Activated CD4-positive, alpha-beta T cell treated with anti-CD3 and anti-CD28 coated beads, Interleukin-2, amount 10 ng/mL, durations not matched to agents 24 days and 14 days (primary cell): ENCODE measurements at regions of chr1 and their contacts with region 1.

Region 1: DNA sequence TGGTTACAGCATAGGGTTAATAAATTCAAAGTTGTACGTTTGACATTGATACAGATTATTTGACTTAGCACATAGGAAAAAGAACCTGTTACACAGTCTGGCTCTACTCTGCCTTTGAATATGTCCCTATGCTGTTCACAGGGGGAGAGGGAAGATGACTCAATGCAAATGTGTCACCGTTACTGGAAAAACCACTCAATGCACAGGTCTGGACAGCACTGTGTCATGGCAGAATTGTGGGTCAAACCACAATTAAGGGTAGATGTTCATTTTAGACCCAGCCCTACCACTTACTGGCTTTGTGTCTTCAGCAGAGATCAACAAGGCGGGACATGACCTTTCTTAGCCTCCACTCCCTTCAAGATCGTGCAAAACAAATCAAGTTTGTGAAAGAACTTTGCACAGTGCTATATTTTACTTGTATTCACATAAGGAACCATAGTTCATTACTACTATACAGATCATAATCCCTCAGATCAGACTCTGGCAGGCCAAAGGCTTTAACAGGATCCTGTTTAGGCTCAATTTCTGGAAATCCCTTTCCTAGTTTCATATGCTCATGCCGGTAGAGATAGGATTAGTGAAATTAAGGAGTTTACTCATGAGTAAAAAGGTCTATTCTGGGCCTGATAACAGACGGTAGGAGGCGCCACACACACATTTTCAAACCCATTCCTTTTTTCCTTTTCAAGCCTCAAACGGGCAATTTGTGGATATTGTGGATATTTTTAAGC is 22.1 kb downstream of the EIF2D start:
- DNase-seq: peak; percentile 90
- H3K4me3 Mint-ChIP-seq: peak overlapping the region; percentile 78
- H3K27ac Mint-ChIP-seq: peak overlapping the region; percentile 94
- H3K4me1 Mint-ChIP-seq: peaks cover 65% of the 10 kb centered on the region
- H3K27me3 Mint-ChIP-seq: no peaks in the 10 kb centered on the region

Region 2: DNA sequence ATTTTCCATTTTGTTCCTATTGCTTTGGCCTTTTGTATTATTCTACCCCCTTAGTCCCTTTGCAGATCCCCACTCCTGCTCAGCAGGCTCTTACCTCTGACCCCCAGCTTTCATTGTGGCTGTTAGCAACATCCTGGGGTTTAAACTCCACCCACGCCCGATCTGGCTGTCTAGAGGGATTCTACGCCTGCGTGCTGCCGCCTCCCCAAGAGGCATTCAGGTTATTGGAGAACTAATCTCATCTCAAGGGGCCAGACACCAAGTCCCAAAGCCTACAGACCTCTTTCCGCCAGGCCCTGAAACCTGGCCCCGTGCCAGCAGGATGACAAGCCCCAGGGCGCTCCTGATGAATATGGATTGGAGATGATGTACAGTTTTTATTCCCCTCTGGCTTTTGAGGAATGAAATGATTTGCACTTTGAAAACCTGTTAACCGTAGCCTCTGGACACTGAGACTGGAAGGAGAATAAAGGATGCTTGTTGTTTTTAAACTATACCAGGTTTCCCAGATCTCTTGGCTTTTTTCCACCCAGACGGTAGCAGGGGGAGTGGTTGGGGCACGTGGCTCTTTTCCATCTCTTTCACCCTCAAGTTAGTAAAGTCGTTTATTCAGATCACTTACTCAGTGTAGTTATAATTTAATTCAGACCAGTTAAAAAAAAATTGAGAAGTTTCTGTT is 134.4 kb before region 1 on chr1:
- intact Hi-C with region 1: no loop called
- DNase-seq: no peak
- H3K4me3 Mint-ChIP-seq: no peak overlapping the region
- H3K27ac Mint-ChIP-seq: no peak overlapping the region
- H3K4me1 Mint-ChIP-seq: peaks cover 18% of the 10 kb centered on the region
- H3K27me3 Mint-ChIP-seq: no peaks in the 10 kb centered on the region

Region 3: DNA sequence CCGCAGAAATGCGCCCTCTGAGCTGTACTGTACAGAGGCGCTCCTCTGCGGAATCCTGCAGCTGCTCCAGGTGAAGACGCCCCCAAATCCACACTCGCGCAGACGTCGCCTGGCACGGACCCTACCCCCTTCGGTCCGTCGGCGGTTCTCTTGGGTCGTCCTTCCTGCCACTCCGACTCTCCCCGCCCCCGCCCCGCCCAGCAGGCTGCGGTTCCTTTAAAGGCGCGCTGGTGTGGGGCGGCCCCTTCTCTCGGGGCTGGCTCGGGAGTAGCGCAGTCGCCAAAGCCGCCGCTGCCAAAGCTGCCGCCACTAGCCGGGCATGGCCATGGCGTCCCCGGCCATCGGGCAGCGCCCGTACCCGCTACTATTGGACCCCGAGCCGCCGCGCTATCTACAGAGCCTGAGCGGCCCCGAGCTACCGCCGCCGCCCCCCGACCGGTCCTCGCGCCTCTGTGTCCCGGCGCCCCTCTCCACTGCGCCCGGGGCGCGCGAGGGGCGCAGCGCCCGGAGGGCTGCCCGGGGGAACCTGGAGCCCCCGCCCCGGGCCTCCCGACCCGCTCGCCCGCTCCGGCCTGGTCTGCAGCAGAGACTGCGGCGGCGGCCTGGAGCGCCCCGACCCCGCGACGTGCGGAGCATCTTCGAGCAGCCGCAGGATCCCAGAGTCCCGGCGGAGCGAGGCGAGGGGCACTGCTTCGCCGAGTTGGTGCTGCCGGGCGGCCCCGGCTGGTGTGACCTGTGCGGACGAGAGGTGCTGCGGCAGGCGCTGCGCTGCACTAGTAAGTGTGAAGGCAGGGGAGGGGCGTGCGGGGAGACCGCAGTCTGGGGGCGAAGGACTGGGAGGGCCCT is 82.7 kb before region 1 on chr1 and contains the start of gene RASSF5:
- intact Hi-C with region 1: loop called (anchors 1 kb)
- DNase-seq: peak; percentile 96
- H3K4me3 Mint-ChIP-seq: peak within 1 kb of the TSS; percentile 80
- H3K27ac Mint-ChIP-seq: peak within 1 kb of the TSS; percentile 58
- H3K4me1 Mint-ChIP-seq: peaks cover 41% of the 10 kb centered on the region
- H3K27me3 Mint-ChIP-seq: peaks cover 22% of the 10 kb centered on the region
- total RNA-seq, gene RASSF5: 193 and 196 TPM in 2 replicates

Region 4: GRCh38 chr1:206544562-206545257 is 45.5 kb before region 1 on chr1:
- intact Hi-C with region 1: loop called (anchors 2 kb)
- DNase-seq: peak; percentile 96
- H3K4me3 Mint-ChIP-seq: no peak overlapping the region
- H3K27ac Mint-ChIP-seq: peak overlapping the region; percentile 66
- H3K4me1 Mint-ChIP-seq: peaks cover 17% of the 10 kb centered on the region
- H3K27me3 Mint-ChIP-seq: no peaks in the 10 kb centered on the region

Region 5: GRCh38 chr1:206556750-206557635 is 33.2 kb before region 1 on chr1:
- intact Hi-C with region 1: loop called (anchors 1 kb)
- DNase-seq: peak; percentile 97
- H3K4me3 Mint-ChIP-seq: peak overlapping the region; percentile 98
- H3K27ac Mint-ChIP-seq: peak overlapping the region; percentile 93
- H3K4me1 Mint-ChIP-seq: peaks cover 69% of the 10 kb centered on the region
- H3K27me3 Mint-ChIP-seq: no peaks in the 10 kb centered on the region

Region 6: GRCh38 chr1:206575165-206575893 is 14.9 kb before region 1 on chr1:
- intact Hi-C with region 1: loop called (anchors 1 kb)
- DNase-seq: peak; percentile 89
- H3K4me3 Mint-ChIP-seq: peak overlapping the region; percentile 84
- H3K27ac Mint-ChIP-seq: peak overlapping the region; percentile 100
- H3K4me1 Mint-ChIP-seq: peaks cover 93% of the 10 kb centered on the region
- H3K27me3 Mint-ChIP-seq: no peaks in the 10 kb centered on the region

Region 7: DNA sequence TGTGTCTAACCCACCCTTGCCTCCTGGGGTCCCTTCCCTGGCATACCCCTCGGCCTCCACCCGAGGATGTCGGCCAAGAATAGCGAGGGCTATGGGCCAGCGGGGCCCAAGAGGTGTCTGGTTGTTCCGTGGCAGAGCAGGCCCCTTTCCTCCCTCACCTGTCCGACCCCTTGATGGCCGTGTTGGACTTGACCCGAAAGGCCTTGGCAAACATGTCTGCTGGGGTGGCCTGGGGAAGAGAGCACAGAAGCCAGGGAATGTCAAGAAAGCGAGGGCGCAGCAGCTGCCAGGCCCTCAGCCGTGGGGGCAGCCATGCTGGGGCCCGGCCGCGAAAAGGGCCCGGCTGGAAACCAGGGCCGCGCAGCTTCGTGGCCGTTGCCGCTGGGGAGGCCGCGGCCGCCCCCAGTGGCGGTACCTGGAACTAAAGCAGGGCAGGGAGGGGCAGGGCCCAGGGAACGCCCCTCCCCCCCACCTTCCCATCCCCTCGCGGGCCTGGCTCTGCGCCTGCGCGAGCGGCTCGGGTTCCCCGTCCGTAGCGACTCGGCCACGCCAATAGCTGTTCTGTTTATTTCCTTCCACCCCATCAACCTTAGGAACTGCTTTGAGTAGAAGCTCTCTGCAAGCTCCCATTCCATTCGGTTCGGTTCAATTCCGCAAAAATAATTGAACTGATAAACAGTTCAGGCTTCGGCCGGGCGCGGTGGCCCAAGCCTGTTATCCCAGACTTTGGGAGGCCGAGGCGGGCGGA is 22.1 kb after region 1 on chr1 and contains the start of gene EIF2D:
- intact Hi-C with region 1: loop called (anchors 1 kb)
- DNase-seq: peak; percentile 98
- H3K4me3 Mint-ChIP-seq: peak within 1 kb of the TSS; percentile 99
- H3K27ac Mint-ChIP-seq: peak within 1 kb of the TSS; percentile 93
- H3K4me1 Mint-ChIP-seq: peaks cover 29% of the 10 kb centered on the region
- H3K27me3 Mint-ChIP-seq: peaks cover 12% of the 10 kb centered on the region
- total RNA-seq, gene EIF2D: 86.6 and 89.4 TPM in 2 replicates

Region 8: GRCh38 chr1:206663832-206664652 is 73.8 kb after region 1 on chr1:
- intact Hi-C with region 1: loop called (anchors 5 kb)
- DNase-seq: peak; percentile 92
- H3K4me3 Mint-ChIP-seq: peak overlapping the region; percentile 57
- H3K27ac Mint-ChIP-seq: peak overlapping the region; percentile 39
- H3K4me1 Mint-ChIP-seq: peaks cover 34% of the 10 kb centered on the region
- H3K27me3 Mint-ChIP-seq: peaks cover 2% of the 10 kb centered on the region

Region 9: DNA sequence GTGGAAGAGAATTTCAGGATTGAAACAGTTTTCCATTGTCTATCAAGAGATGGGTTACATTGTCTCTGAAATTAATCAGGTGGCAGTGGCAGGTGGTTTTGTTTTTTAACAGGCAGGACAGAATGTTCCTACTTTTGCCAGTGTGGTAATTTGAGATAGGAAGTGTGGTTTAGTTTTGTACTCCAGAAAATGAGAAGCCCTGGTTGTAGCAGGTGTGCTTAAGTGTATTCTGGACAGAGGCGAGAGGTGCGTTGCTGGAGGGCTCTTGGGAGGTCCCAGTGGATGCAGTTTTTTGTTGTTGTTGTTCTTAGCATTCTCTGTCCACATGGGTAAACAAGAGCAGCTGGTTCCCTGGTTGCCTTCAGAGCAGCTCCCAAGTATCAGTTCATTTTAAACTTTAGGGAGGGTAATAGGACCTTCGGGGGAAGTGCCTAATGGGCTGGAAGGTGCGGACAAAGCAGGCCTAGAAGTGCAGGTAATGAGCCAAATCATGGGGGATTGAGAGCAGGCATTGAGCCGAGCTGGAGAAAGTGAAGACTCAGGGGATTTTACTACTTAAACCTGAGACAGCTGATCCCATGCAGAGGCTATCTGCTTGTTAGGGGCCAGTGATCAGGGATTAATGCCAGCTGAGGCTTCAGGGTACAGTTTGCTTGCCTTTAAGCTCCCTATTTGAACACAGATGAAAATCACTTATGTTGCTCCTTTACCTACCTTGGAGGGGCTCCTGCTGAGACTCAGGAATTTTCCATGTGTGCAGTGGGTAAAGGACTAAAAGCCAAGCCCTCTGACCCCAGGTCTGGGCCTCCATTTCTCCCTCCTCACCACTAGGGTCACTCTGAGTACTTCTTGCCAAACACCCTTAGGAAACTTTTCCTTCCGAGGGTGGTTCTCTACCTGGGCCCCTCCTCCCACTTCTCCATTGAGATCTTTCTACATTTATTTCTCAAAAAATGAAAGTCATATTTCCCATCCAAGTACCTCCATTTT is 469.0 kb after region 1 on chr1:
- intact Hi-C with region 1: no loop called
- DNase-seq: no peak
- H3K4me3 Mint-ChIP-seq: no peak overlapping the region
- H3K27ac Mint-ChIP-seq: no peak overlapping the region
- H3K4me1 Mint-ChIP-seq: peaks cover 5% of the 10 kb centered on the region
- H3K27me3 Mint-ChIP-seq: peaks cover 5% of the 10 kb centered on the region